ENCODE measurements at regions of chr11 and their contacts with region 1.

Region 1: GRCh38 chr11:65662799-65663638 is at the start of gene RELA:
- DNase-seq: peak; percentile 89
- H3K4me3 Mint-ChIP-seq: peak within 1 kb of the TSS; percentile 89
- H3K27ac Mint-ChIP-seq: peak within 1 kb of the TSS; percentile 93
- H3K4me1 Mint-ChIP-seq: peaks cover 30% of the 10 kb centered on the region
- H3K27me3 Mint-ChIP-seq: no peaks in the 10 kb centered on the region
- total RNA-seq, gene RELA: 102 and 104 TPM in 2 replicates

Region 2: GRCh38 chr11:65540297-65541092 is 122.5 kb before region 1 on chr11:
- intact Hi-C with region 1: loop called (anchors 2 kb)
- DNase-seq: peak; percentile 86
- H3K4me3 Mint-ChIP-seq: peak overlapping the region; percentile 85
- H3K27ac Mint-ChIP-seq: peak overlapping the region; percentile 88
- H3K4me1 Mint-ChIP-seq: peaks cover 28% of the 10 kb centered on the region
- H3K27me3 Mint-ChIP-seq: no peaks in the 10 kb centered on the region

Region 3: DNA sequence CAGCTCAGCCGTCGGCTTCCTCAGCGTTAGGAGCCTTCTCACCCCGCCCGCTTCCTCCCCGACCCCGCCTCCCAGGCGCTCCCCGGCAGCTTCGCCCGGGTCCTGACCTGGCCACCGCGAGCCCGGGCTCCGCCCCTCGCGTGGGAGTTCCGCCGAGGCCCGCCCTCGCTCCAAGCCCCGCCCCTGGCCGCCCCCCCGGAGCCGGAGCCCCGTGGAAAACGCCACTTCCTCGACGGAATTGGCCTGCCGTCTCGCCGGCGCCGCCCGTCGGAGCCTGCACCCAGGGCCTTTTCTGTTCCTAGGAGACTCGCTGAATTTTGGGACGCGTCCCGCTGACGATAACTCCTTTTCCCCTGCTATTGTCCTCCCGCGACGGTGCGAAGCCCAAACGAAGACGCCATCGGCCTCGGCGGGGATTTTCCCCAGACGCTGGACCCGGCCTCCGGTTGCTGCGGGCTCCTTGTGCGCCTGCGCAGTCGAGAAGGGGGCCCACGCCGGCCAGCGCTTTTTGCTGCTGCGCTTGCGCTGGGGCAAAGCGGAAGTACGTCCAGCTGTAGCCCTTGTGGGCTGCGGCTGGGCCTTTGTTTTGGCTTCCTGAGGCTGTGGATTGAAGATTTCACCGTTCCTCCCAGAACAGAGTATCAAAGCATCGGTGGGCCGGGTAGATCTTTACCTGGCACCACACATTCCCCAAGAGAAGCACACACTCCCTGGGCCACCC is 10.3 kb before region 1 on chr11:
- intact Hi-C with region 1: loop called (anchors 1 kb)
- DNase-seq: peak; percentile 95
- H3K4me3 Mint-ChIP-seq: peak overlapping the region; percentile 88
- H3K27ac Mint-ChIP-seq: peak overlapping the region; percentile 97
- H3K4me1 Mint-ChIP-seq: peaks cover 42% of the 10 kb centered on the region
- H3K27me3 Mint-ChIP-seq: peaks cover 3% of the 10 kb centered on the region

Region 4: GRCh38 chr11:65711785-65712632 is 49.0 kb after region 1 on chr11 and contains the start of gene KAT5:
- intact Hi-C with region 1: loop called (anchors 1 kb)
- DNase-seq: peak; percentile 98
- H3K4me3 Mint-ChIP-seq: peak within 1 kb of the TSS; percentile 96
- H3K27ac Mint-ChIP-seq: peak within 1 kb of the TSS; percentile 98
- H3K4me1 Mint-ChIP-seq: peaks cover 29% of the 10 kb centered on the region
- H3K27me3 Mint-ChIP-seq: no peaks in the 10 kb centered on the region
- total RNA-seq, gene KAT5: 68.1 and 75.0 TPM in 2 replicates

Region 5: DNA sequence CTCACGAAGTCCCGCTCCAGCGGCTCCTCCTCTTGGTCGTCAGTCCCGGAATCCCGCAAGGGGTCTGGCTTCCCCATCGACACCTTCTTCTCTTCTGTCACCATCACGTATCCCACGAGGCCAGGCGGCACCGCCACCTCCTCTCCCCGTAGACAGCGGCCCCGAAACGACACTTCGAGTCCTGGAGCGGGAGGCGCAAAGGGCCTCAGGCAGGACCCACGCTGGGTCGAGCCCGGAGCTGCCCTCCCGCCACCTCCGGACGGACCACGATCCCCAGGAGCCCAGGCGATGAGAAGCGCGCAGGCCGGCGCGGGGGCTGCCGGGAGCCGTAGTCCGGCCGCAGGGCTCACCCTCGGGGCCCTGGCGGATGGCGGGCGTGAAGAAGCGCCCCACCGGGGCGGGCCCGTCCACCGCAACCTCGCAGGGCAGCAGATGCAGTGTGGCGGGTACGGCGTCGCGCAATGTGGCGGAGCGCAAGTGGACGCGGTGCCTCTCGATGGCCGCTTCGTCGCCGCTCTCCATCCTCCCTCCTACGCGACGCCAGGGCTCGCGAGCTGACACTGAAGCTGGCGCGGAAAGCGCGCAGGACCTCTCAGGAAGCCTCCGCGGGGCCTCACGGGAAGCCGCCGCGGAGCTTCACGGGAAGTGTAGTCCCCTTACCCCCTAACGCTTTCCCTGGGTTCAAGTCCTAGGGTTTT is 57.4 kb after region 1 on chr11 and contains the start of gene RNASEH2C:
- intact Hi-C with region 1: loop called (anchors 2 kb)
- DNase-seq: peak; percentile 76
- H3K4me3 Mint-ChIP-seq: peak within 1 kb of the TSS; percentile 97
- H3K27ac Mint-ChIP-seq: peak within 1 kb of the TSS; percentile 93
- H3K4me1 Mint-ChIP-seq: peaks cover 22% of the 10 kb centered on the region
- H3K27me3 Mint-ChIP-seq: peaks cover 2% of the 10 kb centered on the region
- total RNA-seq, gene RNASEH2C: 87.6 and 89.0 TPM in 2 replicates

Region 6: DNA sequence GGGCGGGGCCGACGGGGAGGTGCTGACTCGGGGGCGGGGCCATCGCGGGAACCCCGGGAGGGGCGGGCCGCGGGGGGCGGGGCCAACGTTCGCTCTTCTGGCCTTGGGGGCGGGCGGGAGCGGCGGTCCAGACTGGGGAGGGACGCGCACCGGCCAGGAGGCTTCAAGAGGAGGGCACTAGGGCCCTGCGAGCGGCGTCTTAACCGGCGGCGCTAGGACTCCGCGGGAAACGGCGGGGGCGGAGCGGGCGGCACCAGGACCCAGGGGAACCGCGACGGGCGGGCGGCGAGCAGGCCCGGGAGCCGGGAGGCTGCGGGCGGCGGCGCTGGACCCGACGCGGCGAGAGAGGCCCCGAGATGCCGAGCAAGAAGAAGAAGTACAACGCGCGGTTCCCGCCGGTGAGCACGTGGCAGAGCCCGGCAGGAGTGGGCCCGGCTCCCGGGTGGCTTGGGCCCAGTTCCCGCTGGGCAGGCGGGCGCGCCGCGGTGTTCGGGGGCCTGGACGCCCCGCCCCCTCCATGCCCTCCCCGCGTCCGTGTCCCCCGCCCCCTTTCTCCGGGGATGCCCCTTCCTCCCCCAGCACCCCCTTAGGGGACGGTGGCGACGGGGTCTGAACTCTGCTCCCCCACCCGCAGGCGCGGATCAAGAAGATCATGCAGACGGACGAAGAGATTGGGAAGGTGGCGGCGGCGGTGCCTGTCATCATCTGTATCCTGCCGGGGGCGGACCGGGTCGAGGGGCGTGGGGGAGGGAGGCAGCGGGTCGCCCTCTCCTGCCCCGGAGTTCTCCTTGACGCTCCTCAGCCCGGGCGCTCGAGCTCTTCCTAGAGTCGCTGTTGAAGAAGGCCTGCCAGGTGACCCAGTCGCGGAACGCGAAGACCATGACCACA is 256.4 kb after region 1 on chr11 and contains the start of gene DRAP1:
- intact Hi-C with region 1: loop called (anchors 1 kb)
- DNase-seq: peak; percentile 97
- H3K4me3 Mint-ChIP-seq: peak within 1 kb of the TSS; percentile 94
- H3K27ac Mint-ChIP-seq: peak within 1 kb of the TSS; percentile 84
- H3K4me1 Mint-ChIP-seq: peaks cover 17% of the 10 kb centered on the region
- H3K27me3 Mint-ChIP-seq: no peaks in the 10 kb centered on the region
- total RNA-seq, gene DRAP1: 119 and 129 TPM in 2 replicates